Activated T-helper 2 cell treated with anti-CD3 and anti-CD28 coated beads, Interferon-gamma antibody, Interleukin-2, Interleukin-4, amounts not matched to agents 10 μg/mL and 5 μg/mL and 100 μg/mL, durations not matched to agents 14 hours and 24 hours and 36 hours (primary cell): ENCODE measurements at regions of chr10 and their contacts with region 1.

Region 1: GRCh38 chr10:100508691-100509150 is 10.9 kb downstream of the SEC31B start:
- DNase-seq: peak; percentile 58
- H3K4me3 Mint-ChIP-seq: peak overlapping the region; percentile 70
- H3K27ac Mint-ChIP-seq: peak overlapping the region; percentile 87
- H3K4me1 Mint-ChIP-seq: peaks cover 85% of the 10 kb centered on the region
- H3K27me3 Mint-ChIP-seq: no peaks in the 10 kb centered on the region

Region 2: DNA sequence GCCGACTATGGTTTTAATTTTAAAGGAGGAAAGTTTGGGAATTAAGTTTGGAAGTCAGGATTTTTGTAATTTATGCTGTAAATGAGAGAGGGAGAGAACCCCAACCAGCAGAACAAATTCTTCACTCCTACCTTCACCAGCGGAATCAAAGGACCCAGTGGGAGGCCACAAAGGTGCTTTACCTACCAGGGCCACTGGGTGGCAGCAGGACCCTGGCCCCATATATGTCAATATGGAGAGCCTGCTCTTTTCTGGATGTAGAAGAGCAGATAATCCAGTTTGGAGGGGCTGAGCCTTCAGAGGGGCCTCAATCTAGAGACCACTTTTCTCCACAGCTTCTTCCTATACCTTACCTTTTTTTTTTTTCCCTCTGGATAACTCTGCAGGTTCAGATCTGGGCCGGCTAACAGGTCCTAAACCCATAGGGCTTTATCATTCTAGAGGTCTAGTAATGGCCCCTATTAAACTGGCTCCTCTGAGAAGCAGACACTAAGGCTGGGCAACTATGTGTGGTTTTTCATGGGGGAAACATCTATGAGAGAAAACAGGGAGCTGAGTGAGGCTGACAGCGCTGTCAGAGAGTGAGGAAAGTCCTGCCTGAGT is 170.2 kb before region 1 on chr10:
- intact Hi-C with region 1: loop called (anchors 1 kb)
- DNase-seq: peak; percentile 71
- H3K4me3 Mint-ChIP-seq: no peak overlapping the region
- H3K27ac Mint-ChIP-seq: no peak overlapping the region
- H3K4me1 Mint-ChIP-seq: peaks cover 17% of the 10 kb centered on the region
- H3K27me3 Mint-ChIP-seq: peaks cover 9% of the 10 kb centered on the region

Region 3: DNA sequence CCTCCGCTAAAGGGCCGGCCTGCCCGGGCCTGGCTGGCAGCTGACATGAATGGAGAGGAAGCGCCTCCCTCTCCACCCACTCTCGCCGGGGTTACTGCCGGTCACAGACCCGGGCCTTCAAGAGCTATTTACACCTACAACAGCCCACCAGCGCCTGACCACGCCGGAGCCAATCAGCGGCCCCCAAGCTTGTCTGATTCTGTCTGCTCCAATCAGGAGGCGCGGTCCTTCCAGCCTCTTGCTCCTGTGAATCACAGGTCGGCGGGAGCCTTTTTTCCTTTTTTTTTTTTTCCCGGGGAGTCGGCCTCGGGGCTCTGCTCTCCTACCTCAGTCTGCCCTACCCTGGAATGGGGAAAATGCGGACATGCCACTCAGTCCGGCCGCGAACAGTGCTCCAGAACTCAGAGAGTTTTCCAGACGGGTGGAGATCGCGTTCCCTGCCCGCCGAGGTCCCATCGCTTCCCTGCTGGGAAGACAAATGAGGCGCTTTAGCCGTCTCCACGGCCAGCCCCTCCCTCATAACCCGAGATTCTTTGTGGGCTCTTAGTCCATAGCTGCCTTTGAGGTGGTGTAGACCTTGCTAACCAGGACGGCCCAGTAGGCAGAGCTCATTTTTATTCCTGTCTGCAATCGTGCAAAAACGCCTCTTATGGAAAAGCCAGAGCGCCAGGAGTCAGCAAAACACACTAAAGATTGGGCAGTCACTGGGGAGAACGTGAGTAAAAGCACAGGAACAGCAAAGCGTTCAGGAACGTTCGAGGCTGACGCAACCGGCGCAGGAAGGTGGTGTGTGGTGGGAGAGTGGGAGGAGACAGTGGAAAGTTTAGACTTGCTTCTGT is 135.2 kb before region 1 on chr10:
- intact Hi-C with region 1: loop called (anchors 1 kb)
- DNase-seq: peak; percentile 86
- H3K4me3 Mint-ChIP-seq: no peak overlapping the region
- H3K27ac Mint-ChIP-seq: no peak overlapping the region
- H3K4me1 Mint-ChIP-seq: peaks cover 40% of the 10 kb centered on the region
- H3K27me3 Mint-ChIP-seq: no peaks in the 10 kb centered on the region

Region 4: DNA sequence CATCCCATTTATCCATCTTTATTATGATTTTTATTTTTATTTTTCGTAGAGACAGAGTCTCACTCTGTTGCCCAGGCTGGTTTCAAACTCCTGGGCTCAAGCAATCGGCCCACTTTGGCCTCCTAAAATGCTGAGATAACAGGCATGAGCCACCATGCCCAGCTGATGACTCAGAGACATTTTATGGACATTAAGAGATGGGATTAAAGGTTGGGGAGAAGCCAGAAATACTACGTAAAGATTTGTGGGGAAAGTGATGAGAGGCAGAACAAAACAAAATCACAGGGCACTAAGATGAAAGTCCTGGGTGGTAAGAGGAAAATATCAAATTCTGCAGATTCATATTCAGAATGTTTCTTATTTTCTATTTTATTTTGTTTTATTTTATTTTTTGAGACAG is 38.4 kb before region 1 on chr10:
- intact Hi-C with region 1: no loop called
- DNase-seq: no peak
- H3K4me3 Mint-ChIP-seq: no peak overlapping the region
- H3K27ac Mint-ChIP-seq: no peak overlapping the region
- H3K4me1 Mint-ChIP-seq: no peaks in the 10 kb centered on the region
- H3K27me3 Mint-ChIP-seq: peaks cover 7% of the 10 kb centered on the region

Region 5: GRCh38 chr10:100481462-100482081 is 27.1 kb before region 1 on chr10:
- intact Hi-C with region 1: loop called (anchors 1 kb)
- DNase-seq: peak; percentile 88
- H3K4me3 Mint-ChIP-seq: peak overlapping the region; percentile 78
- H3K27ac Mint-ChIP-seq: no peak overlapping the region
- H3K4me1 Mint-ChIP-seq: peaks cover 26% of the 10 kb centered on the region
- H3K27me3 Mint-ChIP-seq: peaks cover 9% of the 10 kb centered on the region

Region 6: DNA sequence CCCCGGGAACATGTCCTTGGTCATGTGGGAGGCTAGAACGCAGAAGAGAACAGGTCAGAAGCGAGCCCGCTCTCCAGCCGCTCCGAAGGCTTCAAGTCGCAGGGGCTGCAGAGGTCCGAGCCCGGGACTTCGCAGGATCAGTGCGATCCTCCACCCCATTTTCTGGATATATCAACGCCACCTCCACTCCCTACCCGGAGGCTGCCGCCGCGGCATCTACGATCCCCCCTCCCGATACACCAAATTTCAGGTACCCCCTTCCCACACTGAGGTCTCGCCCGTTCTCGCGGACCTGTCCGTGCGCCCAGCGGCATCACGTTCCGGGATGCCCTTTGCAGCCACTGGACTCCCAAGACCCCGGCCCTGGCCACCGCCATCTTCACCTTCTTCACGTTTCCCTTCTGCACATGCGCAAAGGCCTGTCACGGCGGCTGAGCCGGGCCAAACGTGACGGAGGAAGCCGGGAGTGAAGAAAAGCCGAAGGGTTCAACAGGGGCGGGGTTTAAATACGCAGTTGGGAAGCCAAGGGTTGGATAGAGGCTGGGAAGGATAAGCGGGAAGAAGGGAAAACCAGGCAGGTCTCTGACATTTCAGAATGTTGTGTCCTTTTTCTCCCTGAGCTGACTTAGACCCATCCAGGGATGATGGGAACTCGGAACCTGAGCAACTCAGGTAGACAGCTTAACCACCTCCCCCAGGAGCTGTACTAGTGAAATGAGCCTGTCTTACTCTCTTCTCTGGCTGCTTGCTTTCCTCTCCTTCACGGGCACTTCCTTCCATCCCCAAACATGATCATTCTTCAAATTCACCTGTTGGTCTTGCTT is 21.0 kb after region 1 on chr10 and contains the start of gene NDUFB8:
- intact Hi-C with region 1: loop called (anchors 1 kb)
- DNase-seq: peak; percentile 83
- H3K4me3 Mint-ChIP-seq: peak within 1 kb of the TSS; percentile 89
- H3K27ac Mint-ChIP-seq: peak within 1 kb of the TSS; percentile 95
- H3K4me1 Mint-ChIP-seq: peaks cover 22% of the 10 kb centered on the region
- H3K27me3 Mint-ChIP-seq: no peaks in the 10 kb centered on the region
- total RNA-seq, gene NDUFB8: 278 and 283 TPM in 2 replicates